Sciatic nerve (tissue), 2 donors: ENCODE measurements at regions of chr1 and their contacts with region 1.

Region 1: GRCh38 chr1:83954166-83954823 is 44.6 kb downstream of the TTLL7 start:
- DNase-seq: no peak
- ATAC-seq: no peak

Region 2: DNA sequence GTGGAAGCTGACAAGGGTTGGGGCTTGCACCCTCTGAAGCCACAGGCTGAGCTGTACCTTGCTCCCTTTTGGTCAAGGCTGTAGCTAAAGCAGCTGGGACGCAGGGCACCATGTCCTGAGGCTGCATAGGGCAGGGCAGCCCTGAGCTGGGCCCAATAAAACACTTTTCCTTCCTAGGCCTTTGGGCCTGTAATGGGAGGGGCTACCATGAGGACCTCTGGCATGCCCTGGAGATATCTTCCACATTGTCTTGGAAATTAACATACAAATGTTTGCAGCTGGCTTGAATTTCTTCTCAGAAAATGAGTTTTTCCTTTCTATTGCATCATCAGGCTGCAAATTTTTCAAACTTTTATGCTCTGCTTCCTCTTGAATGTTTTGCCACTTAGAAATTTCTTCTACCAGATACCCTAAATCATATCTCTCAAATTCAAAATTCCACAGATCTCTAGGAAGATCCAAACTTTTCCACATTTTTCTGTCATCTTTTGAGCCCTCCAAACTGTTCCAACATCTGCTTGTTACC is 77.6 kb after region 1 on chr1:
- intact Hi-C with region 1: loop called (anchors 2 kb)
- DNase-seq: no peak
- ATAC-seq: no peak